IMR-90 (cell line): ENCODE measurements at regions of chr3 and their contacts with region 1.

Region 1: DNA sequence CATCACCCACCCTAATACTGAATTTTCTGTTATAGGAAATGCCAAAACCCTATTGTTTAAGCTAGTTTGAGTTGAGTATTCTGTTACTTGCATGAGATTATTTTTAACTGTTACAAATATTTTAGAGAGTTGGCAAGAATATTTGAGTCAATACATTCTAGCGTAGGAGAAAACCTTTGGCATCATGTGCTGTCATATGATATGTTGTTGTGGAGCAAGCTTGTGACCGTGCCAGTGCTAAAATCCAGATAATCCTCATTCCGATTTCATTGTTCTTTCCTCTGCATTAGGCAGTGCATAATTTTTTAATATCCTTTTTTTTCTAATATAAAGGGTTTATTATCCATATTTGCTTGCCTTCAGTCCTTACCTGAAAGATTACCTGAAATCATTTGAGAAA is 168.0 kb upstream of the GMNC start:
- DNase-seq: no peak
- ATAC-seq: no peak
- H3K4me3 ChIP-seq: no peak overlapping the region
- H3K27ac ChIP-seq: no peak overlapping the region
- H3K4me1 ChIP-seq: peaks cover 3% of the 10 kb centered on the region; the same call in 1 of the 2 replicates
- H3K27me3 ChIP-seq: no peaks in the 10 kb centered on the region
- CTCF ChIP-seq: no peak
- POLR2A ChIP-seq: no peak
- RAD21 ChIP-seq: no peak

Region 2: DNA sequence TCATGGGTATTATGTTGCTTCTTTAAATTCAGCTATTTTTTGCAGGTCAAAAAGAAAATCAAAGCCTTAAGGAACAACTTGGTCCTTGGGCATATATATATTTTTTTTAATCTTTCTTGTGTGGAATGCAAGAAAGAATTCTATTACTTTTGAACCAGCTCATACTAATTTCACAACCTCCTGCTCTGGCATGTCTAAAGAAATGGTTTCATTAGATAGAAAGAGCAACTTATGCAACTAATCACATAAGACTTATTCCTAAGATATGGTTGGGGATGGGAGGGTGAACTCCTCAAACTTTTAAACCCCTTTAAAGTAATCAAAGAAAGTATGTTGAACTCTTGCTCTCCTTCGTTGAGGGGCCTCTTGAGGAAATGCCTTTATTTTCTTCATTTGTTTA is 282.9 kb before region 1 on chr3:
- CTCF ChIA-PET with region 1: no interaction called
- POLR2A ChIA-PET with region 1: no interaction called
- dilution Hi-C with region 1: no loop called
- in situ Hi-C with region 1: no loop called
- intact Hi-C with region 1: no loop called
- DNase-seq: no peak
- ATAC-seq: no peak; the same call in 1 of the 2 replicates
- H3K4me3 ChIP-seq: no peak overlapping the region
- H3K27ac ChIP-seq: no peak overlapping the region
- H3K4me1 ChIP-seq: no peaks in the 10 kb centered on the region
- H3K27me3 ChIP-seq: no peaks in the 10 kb centered on the region; the same call in 1 of the 2 replicates
- CTCF ChIP-seq: no peak
- POLR2A ChIP-seq: no peak
- RAD21 ChIP-seq: no peak

Region 3: DNA sequence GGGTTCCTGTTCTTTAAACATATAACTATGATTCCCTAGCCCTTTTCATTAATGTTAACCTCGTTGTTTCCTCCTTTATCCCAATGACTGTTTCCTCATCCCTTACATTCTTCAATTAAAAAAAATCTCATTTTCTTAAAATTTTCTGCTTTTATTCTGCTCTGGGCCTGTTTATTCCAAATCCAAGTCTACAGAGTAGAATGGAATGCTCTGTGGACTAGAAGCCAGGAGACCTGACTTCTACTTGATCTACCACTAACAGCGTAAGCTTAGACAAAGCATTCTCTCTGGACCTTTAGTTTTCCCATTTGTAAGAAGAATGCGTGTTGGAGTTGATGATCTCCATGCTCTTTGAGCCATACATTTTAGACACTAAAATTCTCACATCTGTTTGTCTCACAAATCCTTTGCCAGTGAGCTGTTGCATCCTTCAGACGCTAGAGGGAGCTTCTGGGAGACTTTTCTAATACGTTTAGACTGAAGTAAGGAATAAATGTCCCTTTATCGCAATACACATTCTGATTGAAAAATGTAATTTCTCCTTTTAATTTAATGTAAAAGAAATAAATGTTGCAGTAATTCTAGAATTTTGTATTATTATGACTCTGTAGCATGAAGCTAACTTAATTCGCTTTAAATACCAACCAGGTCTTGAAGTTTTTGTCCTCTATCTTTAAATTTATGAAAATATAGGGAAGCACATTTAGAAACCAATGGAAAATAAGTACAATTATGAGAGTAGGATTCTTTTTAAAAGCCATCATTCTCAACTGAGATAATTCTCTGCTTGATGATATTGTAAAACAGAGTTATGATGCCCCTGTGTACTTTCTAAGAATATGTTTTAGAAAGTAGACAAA is 146.3 kb before region 1 on chr3:
- CTCF ChIA-PET with region 1: interaction called, 3 read pairs
- POLR2A ChIA-PET with region 1: no interaction called
- dilution Hi-C with region 1: no loop called
- in situ Hi-C with region 1: no loop called
- intact Hi-C with region 1: loop called (anchors 5 kb)
- DNase-seq: peak; percentile 66
- ATAC-seq: peak; percentile 94
- H3K4me3 ChIP-seq: no peak overlapping the region
- H3K27ac ChIP-seq: no peak overlapping the region
- H3K4me1 ChIP-seq: no peaks in the 10 kb centered on the region
- H3K27me3 ChIP-seq: no peaks in the 10 kb centered on the region
- CTCF ChIP-seq: peak; percentile 87
- POLR2A ChIP-seq: no peak
- RAD21 ChIP-seq: peak; percentile 70

Region 4: GRCh38 chr3:190911382-190911781 is 119.1 kb before region 1 on chr3:
- CTCF ChIA-PET with region 1: no interaction called
- POLR2A ChIA-PET with region 1: no interaction called
- dilution Hi-C with region 1: no loop called
- in situ Hi-C with region 1: no loop called
- intact Hi-C with region 1: no loop called
- DNase-seq: no peak
- ATAC-seq: no peak
- H3K4me3 ChIP-seq: no peak overlapping the region
- H3K27ac ChIP-seq: no peak overlapping the region
- H3K4me1 ChIP-seq: no peaks in the 10 kb centered on the region
- H3K27me3 ChIP-seq: no peaks in the 10 kb centered on the region; the same call in 1 of the 2 replicates
- CTCF ChIP-seq: no peak
- POLR2A ChIP-seq: no peak
- RAD21 ChIP-seq: no peak

Region 5: GRCh38 chr3:190972840-190973270 is 57.6 kb before region 1 on chr3:
- CTCF ChIA-PET with region 1: no interaction called
- POLR2A ChIA-PET with region 1: no interaction called
- dilution Hi-C with region 1: no loop called
- in situ Hi-C with region 1: no loop called
- intact Hi-C with region 1: no loop called
- DNase-seq: no peak
- ATAC-seq: no peak
- H3K4me3 ChIP-seq: no peak overlapping the region
- H3K27ac ChIP-seq: no peak overlapping the region
- H3K4me1 ChIP-seq: 0 out of 2 replicates have a peak, but pooled peaks cover 1% of the 10 kb centered on the region
- H3K27me3 ChIP-seq: no peaks in the 10 kb centered on the region
- CTCF ChIP-seq: no peak
- POLR2A ChIP-seq: no peak
- RAD21 ChIP-seq: no peak

Region 6: GRCh38 chr3:191094057-191094845 is 63.8 kb after region 1 on chr3:
- CTCF ChIA-PET with region 1: no interaction called
- POLR2A ChIA-PET with region 1: no interaction called
- dilution Hi-C with region 1: no loop called
- in situ Hi-C with region 1: no loop called
- intact Hi-C with region 1: no loop called
- DNase-seq: peak; percentile 89
- ATAC-seq: peak; percentile 87
- H3K4me3 ChIP-seq: no peak overlapping the region
- H3K27ac ChIP-seq: no peak overlapping the region
- H3K4me1 ChIP-seq: peaks cover 1% of the 10 kb centered on the region; the same call in 1 of the 2 replicates
- H3K27me3 ChIP-seq: no peaks in the 10 kb centered on the region
- CTCF ChIP-seq: no peak
- POLR2A ChIP-seq: no peak
- RAD21 ChIP-seq: no peak